SK-N-SH (cell line): ENCODE measurements at regions of chr6 and their contacts with region 1.

Region 1: GRCh38 chr6:92647625-92648024 is 771.7 kb downstream of the EPHA7 start:
- DNase-seq: no peak
- H3K4me3 ChIP-seq: no peak overlapping the region
- H3K27ac ChIP-seq: no peak overlapping the region
- H3K4me1 ChIP-seq: no peaks in the 10 kb centered on the region
- H3K27me3 ChIP-seq: no peaks in the 10 kb centered on the region
- CTCF ChIP-seq: no peak
- EP300 ChIP-seq: no peak
- RAD21 ChIP-seq: no peak

Region 2: DNA sequence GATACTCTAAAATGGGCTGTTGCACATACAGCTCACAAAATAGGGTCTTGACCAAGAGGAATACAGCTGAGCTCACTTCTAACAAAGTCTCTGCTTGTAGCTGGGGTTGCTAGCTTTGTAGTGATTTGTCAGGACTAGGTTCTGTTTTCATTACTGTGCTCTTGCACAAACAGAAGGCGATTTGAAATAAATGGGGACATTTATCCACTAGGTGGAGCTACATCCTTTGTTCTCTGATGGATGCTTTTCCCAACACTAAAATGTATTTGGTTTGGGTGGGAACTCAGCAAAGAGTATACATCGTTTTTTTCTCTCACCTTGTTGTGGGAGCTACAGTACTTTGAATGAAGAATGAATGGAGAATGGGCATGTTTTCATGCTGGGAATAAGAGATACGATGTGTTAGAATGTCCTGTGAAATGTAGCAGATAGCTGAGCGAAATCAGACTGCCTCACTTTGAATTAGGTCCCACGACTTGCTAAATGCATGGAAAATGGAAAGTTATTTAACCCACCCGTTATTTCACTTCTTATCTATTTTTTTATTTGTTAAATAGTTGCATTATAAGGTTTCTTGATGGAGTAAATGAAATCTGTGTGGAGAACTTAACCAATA is 1566.1 kb before region 1 on chr6:
- CTCF ChIA-PET with region 1: interaction called, 12 read pairs
- POLR2A ChIA-PET with region 1: no interaction called
- DNase-seq: peak; percentile 46
- H3K4me3 ChIP-seq: no peak overlapping the region
- H3K27ac ChIP-seq: no peak overlapping the region
- H3K4me1 ChIP-seq: no peaks in the 10 kb centered on the region; a peak in 1 of 4 replicates
- H3K27me3 ChIP-seq: no peaks in the 10 kb centered on the region; the same call in 1 of the 2 replicates
- CTCF ChIP-seq: peak; percentile 78
- EP300 ChIP-seq: no peak
- RAD21 ChIP-seq: peak; percentile 72

Region 3: DNA sequence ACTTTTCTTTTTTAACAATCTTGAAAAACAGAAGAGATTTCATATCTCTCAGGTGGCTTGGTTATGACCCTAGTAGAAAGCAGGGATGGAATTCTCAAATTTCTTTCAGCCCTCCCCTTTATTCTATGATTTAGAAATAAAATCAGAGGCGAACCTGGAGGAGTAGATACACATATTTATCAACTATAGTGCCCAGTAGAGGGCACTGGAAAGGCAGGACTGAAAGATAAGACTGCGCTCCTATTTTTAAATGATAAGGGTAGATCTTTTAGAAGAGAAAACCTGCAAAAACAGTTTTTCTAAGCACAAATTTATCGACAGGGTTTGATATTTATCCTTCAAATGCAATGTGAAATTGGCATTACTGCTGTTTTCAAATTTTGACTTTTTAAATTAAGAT is 524.9 kb before region 1 on chr6:
- CTCF ChIA-PET with region 1: interaction called, 34 read pairs
- POLR2A ChIA-PET with region 1: no interaction called
- DNase-seq: peak; percentile 11
- H3K4me3 ChIP-seq: no peak overlapping the region
- H3K27ac ChIP-seq: no peak overlapping the region
- H3K4me1 ChIP-seq: no peaks in the 10 kb centered on the region; a peak in 1 of 4 replicates
- H3K27me3 ChIP-seq: no peaks in the 10 kb centered on the region
- CTCF ChIP-seq: peak; percentile 34
- EP300 ChIP-seq: no peak
- RAD21 ChIP-seq: peak; percentile 76

Region 4: GRCh38 chr6:92428443-92428842 is 219.2 kb before region 1 on chr6:
- CTCF ChIA-PET with region 1: no interaction called
- POLR2A ChIA-PET with region 1: no interaction called
- DNase-seq: no peak
- H3K4me3 ChIP-seq: no peak overlapping the region
- H3K27ac ChIP-seq: no peak overlapping the region
- H3K4me1 ChIP-seq: no peaks in the 10 kb centered on the region
- H3K27me3 ChIP-seq: no peaks in the 10 kb centered on the region
- CTCF ChIP-seq: no peak
- EP300 ChIP-seq: no peak
- RAD21 ChIP-seq: no peak

Region 5: GRCh38 chr6:92922216-92922806 is 274.7 kb after region 1 on chr6:
- CTCF ChIA-PET with region 1: no interaction called
- POLR2A ChIA-PET with region 1: no interaction called
- DNase-seq: no peak
- H3K4me3 ChIP-seq: no peak overlapping the region
- H3K27ac ChIP-seq: no peak overlapping the region
- H3K4me1 ChIP-seq: no peaks in the 10 kb centered on the region
- H3K27me3 ChIP-seq: no peaks in the 10 kb centered on the region
- CTCF ChIP-seq: no peak
- EP300 ChIP-seq: no peak
- RAD21 ChIP-seq: no peak